MCF 10A (cell line): ENCODE measurements at regions of chr6 and their contacts with region 1.

Region 1: GRCh38 chr6:9851541-9852380 is 563.1 kb downstream of the TFAP2A start:
- DNase-seq: peak; percentile 85
- H3K4me3 Mint-ChIP-seq: no peak overlapping the region
- H3K27ac Mint-ChIP-seq: no peak overlapping the region
- H3K4me1 Mint-ChIP-seq: no peaks in the 10 kb centered on the region
- H3K27me3 Mint-ChIP-seq: no peaks in the 10 kb centered on the region
- CTCF ChIP-seq: peak; percentile 41

Region 2: GRCh38 chr6:9437836-9438235 is 413.9 kb before region 1 on chr6:
- CTCF ChIA-PET with region 1: no interaction called
- POLR2A ChIA-PET with region 1: no interaction called
- intact Hi-C with region 1: no loop called
- DNase-seq: no peak
- H3K4me3 Mint-ChIP-seq: no peak overlapping the region
- H3K27ac Mint-ChIP-seq: no peak overlapping the region
- H3K4me1 Mint-ChIP-seq: no peaks in the 10 kb centered on the region
- H3K27me3 Mint-ChIP-seq: no peaks in the 10 kb centered on the region
- CTCF ChIP-seq: no peak

Region 3: DNA sequence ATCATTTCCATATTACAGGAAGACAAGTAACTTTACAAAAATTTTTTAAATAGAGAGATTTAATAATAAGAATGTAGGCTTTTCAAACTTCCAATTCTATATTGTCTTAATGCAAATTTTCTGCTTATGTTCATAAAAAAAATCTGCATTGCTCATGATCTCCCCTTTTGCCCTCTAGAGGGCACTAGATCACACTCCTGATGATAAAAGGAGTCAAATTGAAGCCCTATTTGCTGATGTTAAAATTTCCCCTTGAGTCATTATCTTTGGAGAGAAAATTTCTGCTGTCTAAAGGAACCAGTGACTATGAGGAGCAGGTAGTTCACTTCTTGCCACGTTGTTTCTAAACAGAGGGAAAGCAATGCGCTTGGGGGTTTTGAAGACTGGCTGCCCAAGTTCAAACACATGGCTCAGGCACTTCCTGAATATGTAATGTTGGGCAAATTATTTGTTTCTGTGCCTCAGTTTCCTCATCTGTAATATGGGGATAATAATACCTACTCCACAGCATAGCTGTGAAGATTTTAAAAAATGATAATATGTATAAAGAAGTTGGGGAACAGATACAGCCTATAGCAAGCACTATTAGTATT is 311.1 kb before region 1 on chr6:
- CTCF ChIA-PET with region 1: no interaction called
- POLR2A ChIA-PET with region 1: no interaction called
- intact Hi-C with region 1: loop called (anchors 2 kb)
- DNase-seq: peak; percentile 76
- H3K4me3 Mint-ChIP-seq: no peak overlapping the region
- H3K27ac Mint-ChIP-seq: no peak overlapping the region
- H3K4me1 Mint-ChIP-seq: no peaks in the 10 kb centered on the region
- H3K27me3 Mint-ChIP-seq: no peaks in the 10 kb centered on the region
- CTCF ChIP-seq: peak; percentile 59